GM12878 (cell line): ENCODE measurements at regions of chr17 and their contacts with region 1.

Region 1: GRCh38 chr17:58631523-58632323 is 60.1 kb downstream of the TEX14 start:
- DNase-seq: peak; percentile 93
- ATAC-seq: peak; percentile 91
- H3K4me3 ChIP-seq: peak overlapping the region; percentile 59
- H3K27ac ChIP-seq: peak overlapping the region; percentile 98
- H3K4me1 ChIP-seq: peaks cover 4% of the 10 kb centered on the region
- H3K27me3 ChIP-seq: no peaks in the 10 kb centered on the region
- CTCF ChIP-seq: peak in 2 of 3 experiments; percentile 14 to 23; a peak in 2 of 6 replicates
- EP300 ChIP-seq: peak in 1 of 2 experiments; percentile 18; a peak in 1 of 4 replicates
- POLR2A ChIP-seq: peak; percentile 96
- RAD21 ChIP-seq: peak; percentile 42; the same call in 1 of the 2 replicates

Region 2: GRCh38 chr17:58337600-58338453 is 293.9 kb before region 1 on chr17:
- CTCF ChIA-PET with region 1: no interaction called
- POLR2A ChIA-PET with region 1: interaction called, 3 read pairs
- RAD21 ChIA-PET with region 1: no interaction called
- SMC1A ChIA-PET with region 1: no interaction called
- in situ Hi-C with region 1: no loop called
- intact Hi-C with region 1: loop called (anchors 1 kb)
- DNase-seq: peak; percentile 90
- ATAC-seq: peak; percentile 62
- H3K4me3 ChIP-seq: peak overlapping the region; percentile 83
- H3K27ac ChIP-seq: peak overlapping the region; percentile 100
- H3K4me1 ChIP-seq: peaks cover 59% of the 10 kb centered on the region
- H3K27me3 ChIP-seq: no peaks in the 10 kb centered on the region
- CTCF ChIP-seq: no peak
- EP300 ChIP-seq: peak; percentile 98
- POLR2A ChIP-seq: peak; percentile 82
- RAD21 ChIP-seq: peak; percentile 19; the same call in 1 of the 2 replicates

Region 3: DNA sequence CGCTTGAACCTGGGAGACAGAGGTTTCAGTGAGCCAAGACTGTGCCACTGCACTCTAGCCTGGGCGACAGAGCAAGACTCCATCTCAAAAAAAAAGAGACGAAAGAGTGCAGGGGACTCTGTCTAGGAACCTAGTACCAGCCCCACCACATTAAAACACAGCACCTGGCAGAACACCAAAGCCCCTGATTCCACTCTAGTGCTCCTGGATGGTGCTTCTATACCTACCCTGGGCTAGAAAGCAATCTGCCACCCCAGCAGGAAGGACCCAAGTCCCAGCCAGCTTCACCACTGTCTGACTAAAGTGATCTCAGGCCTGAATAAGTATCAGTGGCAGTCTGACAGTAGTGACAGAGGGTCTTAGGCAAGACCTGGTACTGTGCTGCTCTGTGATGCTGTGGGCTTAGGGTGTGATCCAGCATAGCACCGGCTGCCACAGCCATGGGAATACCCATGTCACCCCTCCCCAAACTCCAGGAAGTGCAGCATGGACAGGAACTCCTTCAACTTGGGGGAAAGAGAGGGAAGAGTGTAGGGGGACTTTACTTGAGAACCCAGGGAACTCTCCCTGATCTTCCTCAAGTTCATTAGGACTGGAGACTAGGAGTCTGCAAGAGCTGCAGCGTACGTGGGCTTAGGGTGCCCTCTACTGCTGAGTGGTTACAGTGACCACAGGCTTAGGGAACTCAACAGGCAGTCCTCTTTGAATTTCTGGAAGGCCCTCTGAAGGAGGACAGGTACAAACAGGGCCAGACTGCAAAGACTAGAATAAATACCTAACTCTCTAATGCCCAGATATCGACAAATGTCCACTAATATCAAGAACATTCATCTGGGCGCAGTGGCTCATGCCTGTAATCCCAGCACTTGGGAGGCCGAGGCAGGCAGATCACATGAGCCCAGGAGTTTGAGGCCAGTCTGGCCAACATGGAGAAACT is 184.4 kb before region 1 on chr17:
- CTCF ChIA-PET with region 1: no interaction called
- POLR2A ChIA-PET with region 1: no interaction called
- RAD21 ChIA-PET with region 1: no interaction called
- SMC1A ChIA-PET with region 1: no interaction called
- in situ Hi-C with region 1: no loop called
- intact Hi-C with region 1: no loop called
- DNase-seq: peak; percentile 53
- ATAC-seq: peak; percentile 99
- H3K4me3 ChIP-seq: no peak overlapping the region
- H3K27ac ChIP-seq: no peak overlapping the region
- H3K4me1 ChIP-seq: no peaks in the 10 kb centered on the region
- H3K27me3 ChIP-seq: no peaks in the 10 kb centered on the region
- CTCF ChIP-seq: peak; percentile 84 to 93 (median 88); a peak in 5 of 6 replicates
- EP300 ChIP-seq: no peak
- POLR2A ChIP-seq: no peak
- RAD21 ChIP-seq: peak; percentile 99

Region 4: DNA sequence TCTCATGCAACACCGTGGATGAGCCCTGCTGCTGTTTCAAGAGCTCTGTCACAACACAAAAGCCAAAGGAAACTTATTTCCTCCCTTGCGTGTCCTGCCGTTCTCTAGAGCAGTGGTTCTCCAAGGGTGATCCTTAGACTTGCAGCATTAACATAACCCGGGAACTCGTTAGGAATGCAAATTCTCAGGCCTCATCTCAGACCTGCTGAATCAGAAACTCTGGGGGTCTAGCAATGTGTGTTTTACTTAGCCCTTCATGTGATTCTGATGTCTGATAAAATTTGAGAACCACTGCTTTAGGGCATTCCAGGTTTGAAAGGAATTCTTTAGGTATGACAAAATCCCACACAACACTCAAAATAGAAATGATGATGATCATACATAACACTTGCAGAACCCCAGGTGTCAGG is 65.9 kb before region 1 on chr17:
- CTCF ChIA-PET with region 1: no interaction called
- POLR2A ChIA-PET with region 1: no interaction called
- RAD21 ChIA-PET with region 1: no interaction called
- SMC1A ChIA-PET with region 1: no interaction called
- in situ Hi-C with region 1: no loop called
- intact Hi-C with region 1: no loop called
- DNase-seq: no peak
- ATAC-seq: no peak
- H3K4me3 ChIP-seq: no peak overlapping the region
- H3K27ac ChIP-seq: no peak overlapping the region
- H3K4me1 ChIP-seq: peaks cover 5% of the 10 kb centered on the region
- H3K27me3 ChIP-seq: no peaks in the 10 kb centered on the region
- CTCF ChIP-seq: no peak
- EP300 ChIP-seq: no peak
- POLR2A ChIP-seq: no peak
- RAD21 ChIP-seq: no peak

Region 5: DNA sequence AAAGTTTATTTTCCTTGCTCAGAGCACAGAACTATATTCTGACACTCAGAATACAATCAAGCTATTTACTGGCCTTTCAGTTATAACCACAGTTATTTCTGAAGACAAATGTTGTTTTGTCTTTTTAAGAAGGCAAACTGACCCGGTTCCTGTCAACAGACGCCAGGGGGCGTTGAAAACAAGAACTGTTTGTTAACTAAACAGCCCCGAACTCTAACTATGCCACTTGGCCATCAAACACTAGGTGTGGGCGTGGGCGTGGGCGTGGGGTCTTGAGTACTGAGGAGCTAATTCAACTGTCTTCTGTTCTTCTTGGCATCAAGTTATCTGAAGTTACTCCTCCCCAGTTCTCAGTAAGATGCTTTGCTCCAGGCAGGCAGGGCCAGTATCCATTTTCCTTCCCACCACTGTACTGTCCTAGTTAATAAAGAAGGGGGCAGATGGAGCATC is 54.1 kb before region 1 on chr17:
- CTCF ChIA-PET with region 1: interaction called, 61 read pairs
- POLR2A ChIA-PET with region 1: no interaction called
- RAD21 ChIA-PET with region 1: interaction called, 14 read pairs
- SMC1A ChIA-PET with region 1: interaction called, 14 read pairs
- in situ Hi-C with region 1: no loop called
- intact Hi-C with region 1: no loop called
- DNase-seq: no peak
- ATAC-seq: peak; percentile 82
- H3K4me3 ChIP-seq: no peak overlapping the region
- H3K27ac ChIP-seq: no peak overlapping the region
- H3K4me1 ChIP-seq: peaks cover 11% of the 10 kb centered on the region
- H3K27me3 ChIP-seq: no peaks in the 10 kb centered on the region
- CTCF ChIP-seq: peak; percentile 63 to 84 (median 77)
- EP300 ChIP-seq: no peak
- POLR2A ChIP-seq: no peak
- RAD21 ChIP-seq: peak; percentile 52

Region 6: DNA sequence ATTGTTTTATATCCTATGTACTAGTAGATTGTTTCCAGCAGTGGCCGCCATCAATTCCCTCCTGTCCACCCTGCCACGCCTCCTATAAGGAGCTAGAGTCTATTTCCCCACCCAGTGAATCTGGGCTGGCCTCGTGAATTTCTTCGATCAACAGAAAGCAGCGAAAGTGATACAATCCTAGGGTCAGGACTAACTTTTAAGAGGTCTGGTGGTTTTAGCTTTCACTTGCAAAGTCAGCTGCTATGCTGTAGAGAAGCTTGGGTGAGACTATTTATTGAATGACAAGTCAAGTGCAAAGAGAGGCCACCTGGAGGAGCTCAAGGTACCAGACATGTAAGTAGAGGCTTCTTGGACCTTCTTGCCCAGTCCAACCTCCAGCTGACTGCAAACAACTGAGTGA is 36.4 kb before region 1 on chr17:
- CTCF ChIA-PET with region 1: interaction called, 9 read pairs
- POLR2A ChIA-PET with region 1: interaction called, 5 read pairs
- RAD21 ChIA-PET with region 1: interaction called, 8 read pairs
- SMC1A ChIA-PET with region 1: interaction called, 40 read pairs
- in situ Hi-C with region 1: no loop called
- intact Hi-C with region 1: no loop called
- DNase-seq: no peak
- ATAC-seq: peak; percentile 74
- H3K4me3 ChIP-seq: no peak overlapping the region
- H3K27ac ChIP-seq: no peak overlapping the region
- H3K4me1 ChIP-seq: no peaks in the 10 kb centered on the region
- H3K27me3 ChIP-seq: no peaks in the 10 kb centered on the region
- CTCF ChIP-seq: peak in 2 of 3 experiments; percentile 9 to 33; a peak in 3 of 6 replicates
- EP300 ChIP-seq: no peak
- POLR2A ChIP-seq: no peak
- RAD21 ChIP-seq: peak; percentile 51

Region 7: GRCh38 chr17:58621174-58621573 is 10.5 kb before region 1 on chr17:
- CTCF ChIA-PET with region 1: interaction called, 9 read pairs
- POLR2A ChIA-PET with region 1: interaction called, 16 read pairs
- RAD21 ChIA-PET with region 1: interaction called, 15 read pairs
- SMC1A ChIA-PET with region 1: interaction called, 28 read pairs
- in situ Hi-C with region 1: no loop called
- intact Hi-C with region 1: loop called (anchors 1 kb)
- DNase-seq: peak; percentile 65
- ATAC-seq: peak; percentile 72
- H3K4me3 ChIP-seq: no peak overlapping the region
- H3K27ac ChIP-seq: 0 out of 2 replicates have a peak overlapping the region, but pooled peaks have one; percentile 18
- H3K4me1 ChIP-seq: peaks cover 63% of the 10 kb centered on the region
- H3K27me3 ChIP-seq: no peaks in the 10 kb centered on the region
- CTCF ChIP-seq: no peak
- EP300 ChIP-seq: peak in 1 of 2 experiments; percentile 65; a peak in 2 of 4 replicates
- POLR2A ChIP-seq: no peak
- RAD21 ChIP-seq: no peak

Region 8: DNA sequence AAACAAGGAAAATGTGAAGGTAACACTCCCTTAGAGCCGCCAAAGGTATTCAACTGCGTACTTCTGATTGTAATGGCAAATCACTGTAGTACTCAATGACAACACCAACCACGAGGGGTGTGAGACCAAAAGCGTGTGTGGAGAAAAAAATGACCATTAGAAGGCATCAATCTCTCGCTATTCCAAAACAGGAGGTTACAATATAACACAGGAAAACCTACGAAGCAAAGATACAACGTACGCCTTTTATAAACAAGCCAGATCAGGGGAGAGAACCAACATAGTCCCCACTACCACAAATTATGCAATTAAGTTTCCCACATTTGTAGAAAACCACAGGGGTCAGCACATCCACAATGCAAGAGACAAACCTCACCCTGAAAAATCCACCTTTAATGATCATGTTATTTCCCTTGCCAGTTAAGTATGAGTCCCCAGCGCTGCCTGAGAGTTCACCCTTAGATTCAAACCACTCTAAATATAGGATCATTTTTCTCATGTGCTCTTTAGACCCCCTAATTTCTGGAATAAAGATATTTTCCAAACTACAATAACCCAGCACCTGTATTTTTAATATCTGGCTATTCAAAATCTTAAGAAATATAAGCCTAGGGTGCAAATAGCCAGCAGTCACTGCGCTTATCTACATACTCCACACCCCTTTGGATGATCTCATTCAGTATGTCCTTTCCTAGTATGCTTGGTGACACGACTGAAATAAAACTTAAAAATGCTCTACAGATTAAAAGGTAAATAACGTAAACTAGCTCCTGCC is 47.7 kb after region 1 on chr17:
- CTCF ChIA-PET with region 1: no interaction called
- POLR2A ChIA-PET with region 1: interaction called, 9 read pairs
- RAD21 ChIA-PET with region 1: interaction called, 11 read pairs
- SMC1A ChIA-PET with region 1: interaction called, 7 read pairs
- in situ Hi-C with region 1: no loop called
- intact Hi-C with region 1: loop called (anchors 1 kb)
- DNase-seq: peak; percentile 89
- ATAC-seq: peak; percentile 91
- H3K4me3 ChIP-seq: no peak overlapping the region
- H3K27ac ChIP-seq: 0 out of 2 replicates have a peak overlapping the region, but pooled peaks have one; percentile 33
- H3K4me1 ChIP-seq: peaks cover 11% of the 10 kb centered on the region
- H3K27me3 ChIP-seq: no peaks in the 10 kb centered on the region
- CTCF ChIP-seq: no peak
- EP300 ChIP-seq: peak in 1 of 2 experiments; percentile 64; a peak in 1 of 4 replicates
- POLR2A ChIP-seq: peak; percentile 94
- RAD21 ChIP-seq: no peak